ENCODE measurements at regions of chr18 and their contacts with region 1.

Region 1: DNA sequence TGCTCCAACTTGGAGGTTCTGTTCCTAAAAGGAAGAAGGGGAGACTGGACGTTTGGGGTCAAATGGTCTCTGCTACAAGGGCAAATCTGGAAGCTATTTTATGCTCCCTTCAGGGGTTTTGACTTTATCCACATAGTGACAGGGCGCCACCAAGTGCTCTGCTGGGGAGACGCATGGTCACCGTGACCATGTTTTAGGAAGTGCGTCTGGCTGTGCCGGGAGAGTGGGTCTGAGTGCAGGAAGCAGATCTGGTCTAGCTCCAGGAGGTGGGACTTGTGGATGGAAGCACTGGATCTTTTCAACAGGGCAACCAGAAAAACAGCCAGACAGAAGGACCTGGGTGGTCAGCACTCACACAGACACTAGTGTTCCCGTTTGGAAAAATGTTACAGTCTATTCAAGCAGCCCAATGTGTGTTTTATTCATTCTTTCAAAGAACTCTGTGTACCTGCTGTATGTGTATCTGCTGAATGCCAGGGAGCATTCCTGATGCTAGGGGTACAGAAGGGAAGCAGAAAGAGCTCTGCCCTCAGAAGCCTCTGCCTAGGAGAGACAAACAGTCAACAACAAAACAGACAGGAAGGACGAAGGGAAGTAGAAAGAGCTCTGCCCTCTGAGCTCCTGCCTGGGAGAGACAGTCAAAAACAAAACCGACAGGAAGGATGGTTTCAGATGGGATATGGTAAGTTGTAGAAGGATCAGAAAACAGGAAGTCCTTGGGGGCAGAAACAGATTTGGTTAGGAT is 14.3 kb downstream of the IMPA2 start:
- DNase-seq: peak; percentile 75
- ATAC-seq: peak; percentile 84
- H3K4me3 ChIP-seq: peak overlapping the region in 1 of 3 experiments; percentile 65; a peak in 3 of 6 replicates
- H3K27ac ChIP-seq: peak overlapping the region; percentile 70
- H3K4me1 ChIP-seq: peaks cover 97% of the 10 kb centered on the region
- H3K27me3 ChIP-seq: no peaks in the 10 kb centered on the region
- CTCF ChIP-seq: peak; percentile 91
- EP300 ChIP-seq: no peak
- POLR2A ChIP-seq: no peak
- RAD21 ChIP-seq: peak; percentile 92

Region 2: GRCh38 chr18:11733031-11733430 is 262.6 kb before region 1 on chr18:
- CTCF ChIA-PET with region 1: interaction called, 4 read pairs
- POLR2A ChIA-PET with region 1: no interaction called
- in situ Hi-C with region 1: no loop called
- intact Hi-C with region 1: loop called (anchors 1 kb)
- DNase-seq: peak; percentile 32
- ATAC-seq: peak; percentile 98
- H3K4me3 ChIP-seq: peak overlapping the region in 1 of 3 experiments; percentile 12; a peak in 1 of 6 replicates
- H3K27ac ChIP-seq: no peak overlapping the region
- H3K4me1 ChIP-seq: no peaks in the 10 kb centered on the region
- H3K27me3 ChIP-seq: peaks cover 0 to 9% of the 10 kb centered on the region in 2 experiments; a peak in 2 of 5 replicates
- CTCF ChIP-seq: peak; percentile 93
- EP300 ChIP-seq: no peak
- POLR2A ChIP-seq: no peak
- RAD21 ChIP-seq: peak; percentile 85

Region 3: GRCh38 chr18:11908182-11909060 is 87.2 kb before region 1 on chr18 and contains the start of gene MPPE1:
- CTCF ChIA-PET with region 1: no interaction called
- POLR2A ChIA-PET with region 1: interaction called, 13 read pairs
- in situ Hi-C with region 1: no loop called
- intact Hi-C with region 1: no loop called
- DNase-seq: peak; percentile 73
- ATAC-seq: peak; percentile 95
- H3K4me3 ChIP-seq: peak within 1 kb of the TSS; percentile 68 to 86 (median 82)
- H3K27ac ChIP-seq: peak within 1 kb of the TSS; percentile 96
- H3K4me1 ChIP-seq: peaks cover 30% of the 10 kb centered on the region
- H3K27me3 ChIP-seq: no peaks in the 10 kb centered on the region; a peak in 1 of 5 replicates
- CTCF ChIP-seq: peak; percentile 26; the same call in 1 of the 2 replicates
- EP300 ChIP-seq: no peak
- POLR2A ChIP-seq: peak; percentile 74 to 78
- RAD21 ChIP-seq: no peak
- total RNA-seq, gene MPPE1: 5.4 and 11.9 TPM in 2 replicates

Region 4: GRCh38 chr18:11947214-11948191 is 48.1 kb before region 1 on chr18:
- CTCF ChIA-PET with region 1: interaction called, 3 read pairs
- POLR2A ChIA-PET with region 1: interaction called, 41 read pairs
- in situ Hi-C with region 1: no loop called
- intact Hi-C with region 1: no loop called
- DNase-seq: peak; percentile 79
- ATAC-seq: peak; percentile 87
- H3K4me3 ChIP-seq: peak overlapping the region; percentile 57 to 68 (median 62)
- H3K27ac ChIP-seq: peak overlapping the region; percentile 52
- H3K4me1 ChIP-seq: peaks cover 40% of the 10 kb centered on the region
- H3K27me3 ChIP-seq: no peaks in the 10 kb centered on the region
- CTCF ChIP-seq: no peak
- EP300 ChIP-seq: peak; percentile 12 to 70; a peak in 1 of 4 replicates
- POLR2A ChIP-seq: no peak
- RAD21 ChIP-seq: peak; percentile 14; the same call in 1 of the 2 replicates

Region 5: GRCh38 chr18:11980555-11981382 is 14.8 kb before region 1 on chr18:
- CTCF ChIA-PET with region 1: no interaction called
- POLR2A ChIA-PET with region 1: interaction called, 328 read pairs
- in situ Hi-C with region 1: no loop called
- intact Hi-C with region 1: loop called (anchors 1 kb)
- DNase-seq: peak; percentile 97
- ATAC-seq: peak; percentile 82
- H3K4me3 ChIP-seq: peak overlapping the region; percentile 45 to 74 (median 53); a peak in 5 of 6 replicates
- H3K27ac ChIP-seq: peak overlapping the region; percentile 93
- H3K4me1 ChIP-seq: peaks cover 56% of the 10 kb centered on the region
- H3K27me3 ChIP-seq: no peaks in the 10 kb centered on the region
- CTCF ChIP-seq: 0 out of 2 replicates have a peak, but pooled peaks have one; percentile 19
- EP300 ChIP-seq: 0 out of 4 replicates have a peak, but pooled peaks of 1 of the 2 experiments have one; percentile 4
- POLR2A ChIP-seq: peak; percentile 86 to 89
- RAD21 ChIP-seq: peak; percentile 58

Region 6: DNA sequence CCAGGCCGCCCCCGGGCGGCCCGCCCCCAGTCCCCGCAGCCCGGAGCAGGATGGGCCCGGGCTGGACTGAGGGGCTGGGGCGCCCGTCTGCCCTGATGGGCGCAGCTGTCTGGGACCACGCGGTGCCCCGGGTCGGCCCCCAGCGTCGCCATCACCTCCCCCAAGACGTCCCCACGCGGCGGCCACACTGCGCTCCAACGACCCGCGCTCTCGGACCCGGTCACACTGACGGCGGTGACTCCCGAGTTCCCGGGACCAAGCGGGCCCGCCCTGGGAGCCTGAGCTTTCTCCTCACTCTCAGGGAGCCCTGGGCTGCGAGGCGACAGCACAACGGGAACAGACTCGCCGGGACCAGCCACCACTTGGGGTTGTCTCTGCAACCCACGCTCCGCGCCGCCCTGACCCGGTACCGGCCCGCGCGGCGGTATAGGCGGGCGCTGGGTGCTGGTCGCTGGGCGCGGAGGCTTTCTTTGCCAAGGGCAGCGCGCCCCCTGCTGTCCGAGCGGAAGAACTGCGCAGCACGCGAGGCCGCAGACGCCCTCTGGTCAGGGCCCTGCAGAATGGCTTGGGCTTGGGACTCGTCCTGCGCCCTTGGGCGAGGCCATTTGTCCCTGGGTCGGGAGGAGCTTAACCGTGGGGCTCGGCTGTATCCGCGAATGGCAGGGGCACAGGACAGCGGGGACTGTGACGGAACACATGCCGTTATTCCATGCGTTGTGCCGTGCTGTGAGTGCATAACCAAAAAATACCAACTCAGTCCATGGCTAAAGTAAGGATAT is 43.2 kb after region 1 on chr18:
- CTCF ChIA-PET with region 1: interaction called, 4 read pairs
- POLR2A ChIA-PET with region 1: interaction called, 14 read pairs
- in situ Hi-C with region 1: no loop called
- intact Hi-C with region 1: loop called (anchors 1 kb)
- DNase-seq: peak; percentile 68
- ATAC-seq: peak; percentile 91
- H3K4me3 ChIP-seq: peak overlapping the region; percentile 50 to 75 (median 62); a peak in 5 of 6 replicates
- H3K27ac ChIP-seq: no peak overlapping the region
- H3K4me1 ChIP-seq: peaks cover 27% of the 10 kb centered on the region
- H3K27me3 ChIP-seq: peaks cover 0 to 10% of the 10 kb centered on the region in 2 experiments; a peak in 4 of 5 replicates
- CTCF ChIP-seq: peak; percentile 100
- EP300 ChIP-seq: no peak
- POLR2A ChIP-seq: no peak
- RAD21 ChIP-seq: peak; percentile 99

Region 7: DNA sequence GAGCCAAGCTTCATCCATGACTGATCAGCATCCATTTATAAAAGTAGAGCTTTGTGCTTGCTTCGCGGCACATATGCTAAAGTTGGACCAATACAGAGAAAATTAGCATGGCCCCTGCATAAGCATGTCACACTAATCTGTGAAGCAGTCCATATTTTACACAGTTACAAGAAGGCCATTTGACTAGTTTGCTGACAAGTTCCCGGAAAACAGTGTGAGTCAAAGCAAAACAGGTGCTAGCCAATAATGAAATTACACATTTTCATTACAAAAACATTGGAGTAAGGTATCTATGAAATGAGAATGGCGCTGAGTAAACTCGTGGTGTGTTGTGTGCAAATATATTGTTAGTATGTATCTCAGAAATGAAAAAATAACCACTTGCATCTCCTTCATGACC is 102.8 kb after region 1 on chr18:
- CTCF ChIA-PET with region 1: no interaction called
- POLR2A ChIA-PET with region 1: no interaction called
- in situ Hi-C with region 1: no loop called
- intact Hi-C with region 1: no loop called
- DNase-seq: no peak
- ATAC-seq: no peak
- H3K4me3 ChIP-seq: no peak overlapping the region
- H3K27ac ChIP-seq: no peak overlapping the region
- H3K4me1 ChIP-seq: no peaks in the 10 kb centered on the region
- H3K27me3 ChIP-seq: peaks cover 0 to 6% of the 10 kb centered on the region in 2 experiments; a peak in 1 of 5 replicates
- CTCF ChIP-seq: no peak
- EP300 ChIP-seq: no peak
- POLR2A ChIP-seq: no peak
- RAD21 ChIP-seq: no peak